ENCODE measurements at regions of chr17 and their contacts with region 1.

Region 1: DNA sequence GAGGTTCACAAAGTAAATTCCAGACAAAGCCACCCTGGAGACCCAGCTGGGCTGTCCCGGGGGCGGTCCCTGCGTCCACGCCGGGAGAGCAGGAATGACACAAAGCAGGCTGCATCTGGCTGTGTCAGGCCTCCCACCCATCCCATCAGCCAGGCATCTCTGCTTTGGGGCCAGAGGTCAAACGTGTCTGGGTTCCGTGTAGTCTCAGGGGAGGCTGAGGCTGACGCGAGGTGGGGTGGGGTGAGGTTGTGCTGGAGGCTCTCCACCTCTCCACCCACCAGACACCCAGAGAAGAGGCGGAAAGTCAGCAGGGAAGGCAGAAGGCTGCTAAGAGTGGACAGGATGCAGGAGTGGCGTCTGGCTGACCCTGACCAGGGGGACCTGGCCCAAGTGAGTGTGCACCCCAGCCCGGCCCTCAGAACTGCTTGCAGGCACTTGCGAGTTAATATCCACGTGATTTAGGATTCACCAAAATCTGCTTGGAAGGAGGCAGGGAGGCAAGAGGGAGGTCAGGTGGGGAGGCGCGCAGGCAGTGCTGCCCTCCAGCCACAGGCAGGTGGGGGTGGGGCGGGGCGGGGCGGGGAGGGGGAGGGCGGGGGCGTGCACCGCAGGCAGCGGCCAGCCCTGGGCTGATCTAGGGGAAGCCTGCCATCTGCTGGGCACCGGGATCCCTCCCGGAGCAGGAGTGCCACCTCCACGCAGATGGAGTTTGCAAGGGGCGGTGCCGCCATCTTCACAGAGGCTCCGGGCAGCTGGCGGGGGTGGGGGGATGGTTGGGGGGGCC is 44.3 kb downstream of the TBC1D16 start:
- DNase-seq: peak; percentile 91
- H3K4me3 ChIP-seq: peak overlapping the region; percentile 5 to 46 (median 30)
- H3K27ac ChIP-seq: peak overlapping the region in 3 of 4 donors; percentile 37 to 72 (median 54)
- H3K4me1 ChIP-seq: peaks cover 35 to 79% (median 71%) of the 10 kb centered on the region in 4 donors
- H3K27me3 ChIP-seq: no peaks in the 10 kb centered on the region
- CTCF ChIP-seq: peak in 4 of 5 experiments; percentile 16 to 68 (median 65)
- EP300 ChIP-seq: no peak
- POLR2A ChIP-seq: no peak

Region 2: GRCh38 chr17:78925234-78925633 is 1066.1 kb before region 1 on chr17 and contains the start of gene TIMP2:
- in situ Hi-C with region 1: no loop called
- intact Hi-C with region 1: no loop called
- DNase-seq: peak; percentile 90
- H3K4me3 ChIP-seq: peak within 1 kb of the TSS; percentile 70 to 85 (median 74)
- H3K27ac ChIP-seq: peak within 1 kb of the TSS; percentile 92 to 99 (median 95)
- H3K4me1 ChIP-seq: peaks cover 22 to 55% (median 47%) of the 10 kb centered on the region in 4 donors
- H3K27me3 ChIP-seq: peaks cover 18% of the 10 kb centered on the region
- CTCF ChIP-seq: peak in 2 of 5 experiments; percentile 34 to 41
- EP300 ChIP-seq: no peak
- POLR2A ChIP-seq: no peak
- total RNA-seq, gene TIMP2: 32.2 to 70.7 (median 54.6) TPM

Region 3: DNA sequence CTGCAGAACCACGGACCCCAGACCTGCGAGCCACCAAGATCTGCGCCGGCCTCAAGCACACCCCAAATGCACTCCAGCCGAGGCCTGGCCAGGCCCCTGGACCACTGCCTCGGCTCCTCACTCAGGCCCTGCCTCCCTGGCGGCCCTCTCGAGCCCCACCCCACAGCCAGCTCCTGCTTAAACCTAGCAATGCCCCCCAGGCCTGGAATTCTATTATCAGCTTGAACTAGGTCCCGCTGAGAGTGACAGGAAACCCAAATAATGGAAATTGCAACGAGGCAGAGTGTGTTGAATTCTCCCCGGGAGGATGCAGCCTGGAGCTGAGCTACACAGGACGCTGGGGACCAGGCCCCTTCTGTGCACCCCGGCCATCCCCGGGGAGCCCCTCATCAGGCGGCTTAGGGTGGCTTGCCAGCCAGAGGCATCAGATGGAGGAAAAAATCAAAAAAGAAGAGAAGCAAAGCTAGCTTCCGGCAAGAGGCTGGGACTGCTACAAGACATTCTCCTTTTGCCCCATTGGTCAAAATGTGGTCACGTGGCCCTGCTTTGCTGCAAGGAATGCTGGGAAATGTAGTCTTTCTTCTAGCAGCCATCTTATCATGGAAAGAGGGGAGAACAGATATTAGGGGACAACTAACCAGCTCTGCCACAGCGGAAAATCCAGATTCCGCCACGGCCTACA is 263.0 kb before region 1 on chr17:
- in situ Hi-C with region 1: no loop called
- intact Hi-C with region 1: no loop called
- DNase-seq: peak; percentile 79
- H3K4me3 ChIP-seq: peak overlapping the region; percentile 15 to 45 (median 30)
- H3K27ac ChIP-seq: peak overlapping the region in 2 of 4 donors; percentile 31 to 46
- H3K4me1 ChIP-seq: peaks cover 0 to 8% (median 2%) of the 10 kb centered on the region in 4 donors
- H3K27me3 ChIP-seq: no peaks in the 10 kb centered on the region
- CTCF ChIP-seq: no peak
- EP300 ChIP-seq: no peak
- POLR2A ChIP-seq: no peak

Region 4: GRCh38 chr17:79789534-79790353 is 201.6 kb before region 1 on chr17:
- in situ Hi-C with region 1: no loop called
- intact Hi-C with region 1: loop called (anchors 5 kb)
- DNase-seq: peak; percentile 50
- H3K4me3 ChIP-seq: peak overlapping the region in 1 of 4 donors; percentile 20
- H3K27ac ChIP-seq: no peak overlapping the region
- H3K4me1 ChIP-seq: peaks cover 0 to 39% (median 27%) of the 10 kb centered on the region in 4 donors
- H3K27me3 ChIP-seq: peaks cover 93% of the 10 kb centered on the region
- CTCF ChIP-seq: peak; percentile 56 to 83 (median 80)
- EP300 ChIP-seq: no peak
- POLR2A ChIP-seq: no peak

Region 5: GRCh38 chr17:79810130-79811010 is 181.0 kb before region 1 on chr17:
- in situ Hi-C with region 1: loop called in 2 of 4 experiments (anchors 25 kb)
- intact Hi-C with region 1: no loop called
- DNase-seq: peak; percentile 85
- H3K4me3 ChIP-seq: peak overlapping the region in 1 of 4 donors; percentile 21
- H3K27ac ChIP-seq: no peak overlapping the region
- H3K4me1 ChIP-seq: peaks cover 25 to 55% (median 53%) of the 10 kb centered on the region in 4 donors
- H3K27me3 ChIP-seq: peaks cover 99% of the 10 kb centered on the region
- CTCF ChIP-seq: no peak
- EP300 ChIP-seq: no peak
- POLR2A ChIP-seq: no peak

Region 6: DNA sequence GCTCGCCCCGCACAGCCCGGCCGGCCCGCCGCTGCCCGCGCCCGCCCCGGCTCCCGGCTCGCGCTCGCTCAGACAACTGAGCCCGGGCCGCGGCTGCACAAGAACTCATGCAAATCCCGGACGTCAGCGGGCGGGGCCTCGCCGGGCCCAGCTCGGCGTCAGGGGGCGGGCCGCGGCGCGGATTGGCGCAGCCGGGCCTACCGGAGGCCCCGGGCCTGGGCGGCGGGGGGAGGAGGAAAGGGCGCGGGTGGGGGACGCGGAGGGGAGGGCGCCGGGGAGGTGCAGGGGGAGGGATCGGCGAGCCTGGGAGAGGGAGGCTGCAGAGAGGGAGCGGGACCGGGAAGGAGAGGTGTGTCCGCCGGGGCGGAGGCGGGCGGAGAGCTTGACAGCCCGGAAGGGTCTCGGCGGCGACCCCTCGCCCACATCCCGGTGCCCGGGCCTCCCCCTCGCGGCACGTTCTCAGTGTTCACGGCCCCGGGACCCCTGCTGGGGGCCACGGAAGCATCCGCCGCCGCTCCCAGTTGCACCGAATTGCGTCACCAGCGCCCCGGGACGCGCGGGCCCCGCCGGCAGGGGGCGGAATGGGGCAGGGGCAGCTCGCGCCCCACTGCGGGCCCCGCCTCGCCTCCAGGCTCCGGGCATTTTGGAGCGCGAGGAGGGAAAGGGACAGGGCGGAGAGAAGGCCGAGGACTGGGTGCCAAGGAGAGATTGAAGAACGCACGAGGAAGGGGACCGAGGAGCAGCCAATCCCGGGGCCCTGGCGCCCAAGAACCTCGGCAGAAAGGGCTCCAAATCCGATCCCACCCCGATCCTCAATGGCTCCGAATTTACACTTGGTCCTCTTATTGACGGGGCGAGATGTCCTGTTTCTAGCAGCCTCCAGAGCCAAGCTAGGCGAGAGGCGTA is 151.7 kb before region 1 on chr17 and contains the start of gene CBX4:
- in situ Hi-C with region 1: no loop called
- intact Hi-C with region 1: loop called (anchors 10 kb)
- DNase-seq: peak; percentile 97
- H3K4me3 ChIP-seq: peak within 1 kb of the TSS; percentile 63 to 92 (median 74)
- H3K27ac ChIP-seq: peak within 1 kb of the TSS; percentile 98 to 99 (median 98)
- H3K4me1 ChIP-seq: peaks cover 43 to 81% (median 70%) of the 10 kb centered on the region in 4 donors
- H3K27me3 ChIP-seq: peaks cover 43% of the 10 kb centered on the region
- CTCF ChIP-seq: peak; percentile 69 to 96 (median 80)
- EP300 ChIP-seq: no peak
- POLR2A ChIP-seq: peak; percentile 74
- total RNA-seq, gene CBX4: 6.6 to 25.1 (median 8.3) TPM